Left lung (tissue), 14 donors: ENCODE measurements at regions of chr11 and their contacts with region 1.

Region 1: DNA sequence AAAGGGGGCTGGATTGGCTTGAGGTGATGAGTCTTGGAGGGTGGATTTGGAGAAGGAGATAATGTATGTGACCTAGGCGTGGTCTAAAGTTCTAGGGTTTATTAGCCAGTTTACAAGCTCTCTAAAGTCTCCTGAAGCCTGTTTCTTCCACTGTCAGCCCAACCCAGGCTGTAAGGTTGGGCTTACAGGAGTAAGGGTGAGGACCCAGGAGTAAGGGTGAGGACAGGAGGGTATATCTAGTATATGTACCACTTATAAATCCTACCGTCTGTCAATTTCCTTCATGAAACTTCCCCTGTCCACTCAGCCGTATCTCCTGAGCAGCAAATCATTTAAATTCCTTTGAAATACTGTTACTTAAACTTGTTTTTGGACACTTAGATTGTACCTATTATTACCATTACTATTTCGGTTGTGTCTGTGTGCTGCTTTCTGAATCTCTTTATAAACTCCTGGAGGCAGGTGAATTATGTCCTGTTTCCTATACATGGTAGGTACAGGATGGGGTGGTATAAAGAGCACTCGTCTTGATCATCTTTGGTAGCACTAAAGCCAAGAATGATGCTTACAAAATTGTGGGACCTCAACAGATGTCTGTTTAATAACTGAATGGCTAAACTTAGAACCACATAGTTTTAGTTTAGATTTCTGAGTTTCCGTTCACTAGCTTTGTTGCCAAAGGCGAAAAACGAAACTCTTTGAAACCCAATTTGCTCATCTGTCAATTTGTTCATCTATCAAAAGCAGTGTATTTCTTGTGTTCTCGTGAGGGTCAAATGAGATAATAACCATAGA is 192.0 kb downstream of the GRIK4 start:
- DNase-seq: no peak
- ATAC-seq: no peak
- H3K4me3 ChIP-seq: no peak overlapping the region
- H3K27ac ChIP-seq: no peak overlapping the region
- H3K4me1 ChIP-seq: no peaks in the 10 kb centered on the region
- H3K27me3 ChIP-seq: no peaks in the 10 kb centered on the region
- CTCF ChIP-seq: no peak

Region 2: GRCh38 chr11:120316842-120317688 is 386.5 kb before region 1 on chr11:
- intact Hi-C with region 1: loop called in 1 of 2 experiments (anchors 5 kb)
- DNase-seq: peak in 3 of 4 donors; percentile 79 to 84 (median 83)
- ATAC-seq: peak; percentile 96
- H3K4me3 ChIP-seq: no peak overlapping the region
- H3K27ac ChIP-seq: peak overlapping the region; percentile 28 to 55
- H3K4me1 ChIP-seq: peaks cover 5 to 12% of the 10 kb centered on the region in 2 donors
- H3K27me3 ChIP-seq: peaks cover 0 to 9% of the 10 kb centered on the region in 2 donors
- CTCF ChIP-seq: no peak